Activated B cell treated with CpG ODN at 0.5 μM for 24 hours (primary cell): ENCODE measurements at regions of chr4 and their contacts with region 1.

Region 1: GRCh38 chr4:20422398-20422797 is 170.7 kb downstream of the SLIT2 start:
- DNase-seq: no peak
- ATAC-seq: peak; percentile 58
- H3K4me3 Mint-ChIP-seq: no peak overlapping the region
- H3K27ac Mint-ChIP-seq: no peak overlapping the region
- H3K4me1 Mint-ChIP-seq: peaks cover 5% of the 10 kb centered on the region
- H3K27me3 Mint-ChIP-seq: no peaks in the 10 kb centered on the region
- CTCF ChIP-seq: no peak

Region 2: DNA sequence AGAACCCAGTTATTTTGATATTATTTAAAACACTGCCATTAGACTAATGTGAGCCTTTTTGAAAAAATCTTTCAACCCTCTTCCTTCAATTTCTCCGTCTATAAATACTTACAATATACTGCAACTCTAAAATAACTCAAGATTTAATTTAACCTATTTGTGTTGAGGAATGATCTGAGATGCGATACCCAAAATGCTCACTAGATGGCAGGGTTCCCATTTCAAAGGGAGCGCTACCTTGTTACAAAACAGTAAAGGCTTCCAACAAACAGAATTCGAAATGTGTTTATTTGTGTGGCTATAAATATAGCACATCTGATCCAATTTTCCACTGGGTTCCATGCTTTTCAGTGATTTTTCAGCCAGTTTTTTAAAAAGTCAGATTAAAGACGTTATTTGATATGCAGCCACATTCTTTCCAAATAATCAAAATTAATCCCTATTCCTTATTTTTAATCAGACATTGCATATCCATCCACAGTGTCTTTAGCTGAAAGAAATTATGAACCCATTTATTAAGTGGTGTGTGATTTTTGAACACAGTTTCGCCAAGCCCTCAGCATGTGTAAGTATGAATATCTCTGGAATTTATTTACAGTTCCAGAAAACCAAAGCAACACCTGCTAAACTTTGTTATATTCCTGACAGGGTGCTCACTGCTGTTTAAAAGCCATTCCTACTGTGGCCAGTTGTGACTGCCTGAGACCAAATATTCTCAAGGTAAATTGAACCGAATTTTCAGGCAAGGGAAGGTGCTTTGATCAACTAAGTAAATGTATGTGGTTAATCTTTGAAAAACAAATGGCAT is 1732.9 kb before region 1 on chr4:
- CTCF ChIA-PET with region 1: no interaction called
- POLR2A ChIA-PET with region 1: no interaction called
- intact Hi-C with region 1: loop called (anchors 10 kb)
- DNase-seq: no peak
- ATAC-seq: no peak
- H3K4me3 Mint-ChIP-seq: no peak overlapping the region
- H3K27ac Mint-ChIP-seq: no peak overlapping the region
- H3K4me1 Mint-ChIP-seq: no peaks in the 10 kb centered on the region
- H3K27me3 Mint-ChIP-seq: no peaks in the 10 kb centered on the region
- CTCF ChIP-seq: peak; percentile 95

Region 3: GRCh38 chr4:20684852-20685763 is 262.7 kb after region 1 on chr4:
- CTCF ChIA-PET with region 1: interaction called, 4 read pairs
- POLR2A ChIA-PET with region 1: no interaction called
- intact Hi-C with region 1: loop called (anchors 1 kb)
- DNase-seq: no peak
- ATAC-seq: no peak
- H3K4me3 Mint-ChIP-seq: no peak overlapping the region
- H3K27ac Mint-ChIP-seq: no peak overlapping the region
- H3K4me1 Mint-ChIP-seq: no peaks in the 10 kb centered on the region
- H3K27me3 Mint-ChIP-seq: peaks cover 7% of the 10 kb centered on the region
- CTCF ChIP-seq: peak; percentile 89

Region 4: DNA sequence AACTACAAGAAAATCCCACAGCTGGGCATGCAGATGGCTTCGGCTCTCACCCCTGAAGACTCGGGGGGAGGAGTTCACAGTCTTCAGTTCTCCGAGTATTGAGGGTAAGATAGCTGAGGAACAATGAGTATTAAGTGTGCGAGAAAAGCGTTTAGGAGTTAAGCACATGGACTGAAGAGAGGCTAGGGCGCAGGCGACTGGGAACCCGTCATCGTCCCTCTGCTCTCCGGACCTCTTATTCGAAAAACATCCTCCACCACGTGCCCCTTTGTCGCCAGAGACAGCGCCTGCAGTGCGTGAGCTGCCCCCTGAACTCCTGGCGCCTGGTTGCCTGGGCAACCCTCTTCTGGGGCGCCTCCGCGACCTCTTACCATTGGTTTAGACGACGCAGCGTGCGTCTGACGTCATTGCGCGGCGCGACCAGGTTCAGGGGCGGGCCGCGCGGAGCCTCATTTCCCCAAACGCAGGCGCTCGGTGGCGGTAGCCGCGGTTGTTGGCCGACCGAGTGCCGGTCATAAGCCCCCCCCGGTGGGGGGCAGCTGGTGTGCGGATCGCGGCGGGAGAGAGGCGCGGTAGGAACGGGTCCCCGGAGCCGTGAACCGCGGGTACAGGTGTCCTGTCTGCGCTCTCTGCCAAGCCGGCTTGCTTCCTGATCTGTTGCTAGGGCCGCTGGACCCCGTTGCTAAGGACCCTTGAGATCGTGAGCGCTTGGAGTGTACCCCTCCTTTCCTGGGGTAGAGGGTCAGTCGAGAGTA is 277.8 kb after region 1 on chr4 and contains the start of gene PACRGL:
- CTCF ChIA-PET with region 1: no interaction called
- POLR2A ChIA-PET with region 1: no interaction called
- intact Hi-C with region 1: loop called (anchors 5 kb)
- DNase-seq: peak; percentile 90
- ATAC-seq: peak; percentile 97
- H3K4me3 Mint-ChIP-seq: peak within 1 kb of the TSS; percentile 95
- H3K27ac Mint-ChIP-seq: peak within 1 kb of the TSS; percentile 93
- H3K4me1 Mint-ChIP-seq: peaks cover 16% of the 10 kb centered on the region
- H3K27me3 Mint-ChIP-seq: peaks cover 8% of the 10 kb centered on the region
- CTCF ChIP-seq: no peak
- total RNA-seq, gene PACRGL: 13.4 and 16.4 TPM in 2 replicates

Region 5: GRCh38 chr4:21765810-21766407 is 1343.5 kb after region 1 on chr4:
- CTCF ChIA-PET with region 1: no interaction called
- POLR2A ChIA-PET with region 1: no interaction called
- intact Hi-C with region 1: loop called (anchors 5 kb)
- DNase-seq: no peak
- ATAC-seq: no peak
- H3K4me3 Mint-ChIP-seq: no peak overlapping the region
- H3K27ac Mint-ChIP-seq: no peak overlapping the region
- H3K4me1 Mint-ChIP-seq: no peaks in the 10 kb centered on the region
- H3K27me3 Mint-ChIP-seq: no peaks in the 10 kb centered on the region
- CTCF ChIP-seq: no peak